Posterior cingulate gyrus (tissue), 11 donors: ENCODE measurements at regions of chr19 and their contacts with region 1.

Region 1: DNA sequence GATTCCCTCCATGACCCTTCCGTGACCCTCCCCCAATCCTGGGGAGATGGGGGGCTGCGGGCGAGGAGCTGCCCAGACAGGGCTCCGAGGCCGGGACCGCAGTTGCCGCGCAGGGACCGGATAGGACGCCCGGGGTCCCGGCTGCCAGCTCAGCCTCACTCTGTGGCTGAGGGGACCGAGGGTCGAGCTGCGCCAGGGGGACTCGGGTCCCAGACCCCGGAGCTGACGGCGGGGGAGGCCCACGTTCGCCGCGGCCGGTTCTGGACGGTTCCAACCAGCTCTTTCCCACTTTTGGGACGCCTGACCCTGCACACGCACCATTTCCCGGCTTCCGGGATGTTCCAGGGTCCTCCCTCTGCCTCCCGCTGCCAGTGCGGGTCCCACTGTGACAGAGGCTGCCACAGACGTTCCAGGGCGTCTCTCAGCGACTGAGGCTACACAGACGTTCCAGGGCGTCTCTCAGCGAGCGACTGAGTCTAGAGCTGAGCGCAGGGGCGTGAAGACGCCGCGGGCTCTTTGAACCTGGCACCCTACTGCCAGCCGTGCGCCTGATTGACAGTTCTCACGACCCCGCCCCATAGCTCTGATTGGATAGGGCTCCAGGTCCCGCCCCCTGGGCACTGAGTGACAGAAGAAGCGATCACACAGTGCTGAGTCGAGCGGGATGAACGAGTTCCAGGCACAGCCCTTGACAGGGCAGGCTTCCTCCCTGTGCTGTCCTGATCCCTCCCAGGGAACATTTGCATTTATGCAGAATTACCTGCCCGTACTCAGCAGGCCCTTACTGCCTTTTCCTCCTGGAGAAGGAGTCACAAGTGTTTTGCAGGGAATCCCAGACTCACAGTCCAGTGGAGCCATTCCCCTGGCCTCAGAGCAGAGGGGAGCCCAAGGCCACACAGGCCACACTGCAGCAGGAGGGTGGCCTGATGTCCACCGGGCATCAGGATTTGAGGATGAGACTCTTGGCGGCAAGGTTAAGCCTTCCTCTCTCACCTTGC is at the start of gene ZNF563:
- DNase-seq: peak; percentile 95 to 100 (median 99)

Region 2: GRCh38 chr19:12217332-12217731 is 116.1 kb before region 1 on chr19:
- intact Hi-C with region 1: no loop called
- DNase-seq: no peak

Region 3: DNA sequence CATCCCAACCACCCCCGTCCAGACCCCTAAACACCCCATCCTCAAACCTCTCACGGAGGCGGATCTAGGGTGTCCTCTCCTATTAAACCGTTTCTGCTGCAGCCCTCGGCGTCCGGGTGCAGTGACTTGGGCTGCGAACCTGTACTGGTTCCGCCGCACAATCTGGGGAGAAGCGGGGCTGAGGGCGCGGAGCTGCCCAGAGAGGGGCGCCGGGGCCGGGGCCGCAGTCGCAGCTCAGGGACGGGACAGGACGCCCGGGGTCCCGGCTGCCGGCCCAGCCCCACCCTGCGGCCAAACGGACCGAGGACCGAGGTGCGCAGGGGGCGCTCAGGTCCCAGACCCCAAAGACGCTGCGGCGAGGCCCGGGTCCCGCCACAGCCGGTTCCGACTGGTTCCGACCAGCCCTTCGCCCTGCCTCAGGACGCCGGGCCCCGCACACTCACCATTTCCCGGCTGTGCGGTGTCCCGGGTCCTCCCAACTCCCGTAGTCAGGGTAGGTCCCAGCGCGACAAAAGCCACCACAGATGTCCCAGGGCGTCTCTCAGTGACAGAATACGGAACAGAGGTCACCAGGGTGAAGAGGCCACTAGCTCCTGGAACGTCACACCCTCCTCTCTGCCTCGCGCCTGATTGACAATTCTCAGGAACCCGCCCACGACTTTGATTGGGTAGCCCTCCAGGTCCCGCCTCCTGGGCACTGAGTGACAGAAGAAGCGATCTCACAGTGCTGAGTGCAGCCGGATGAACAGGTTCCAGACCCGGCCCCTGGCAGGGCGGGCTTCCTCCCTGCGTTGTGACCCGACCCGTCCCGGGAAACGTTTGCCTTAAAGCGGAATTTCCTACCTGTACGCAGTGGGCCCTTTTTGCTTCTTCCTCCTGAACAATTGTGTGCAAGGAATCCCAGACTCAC is 39.0 kb before region 1 on chr19 and contains the start of gene ZNF44:
- intact Hi-C with region 1: loop called (anchors 2 kb)
- DNase-seq: peak; percentile 96 to 100 (median 98)

Region 4: GRCh38 chr19:12365236-12366162 is 32.0 kb after region 1 on chr19 and contains the start of gene ZNF442:
- intact Hi-C with region 1: loop called (anchors 2 kb)
- DNase-seq: peak; percentile 90 to 99 (median 94)

Region 5: DNA sequence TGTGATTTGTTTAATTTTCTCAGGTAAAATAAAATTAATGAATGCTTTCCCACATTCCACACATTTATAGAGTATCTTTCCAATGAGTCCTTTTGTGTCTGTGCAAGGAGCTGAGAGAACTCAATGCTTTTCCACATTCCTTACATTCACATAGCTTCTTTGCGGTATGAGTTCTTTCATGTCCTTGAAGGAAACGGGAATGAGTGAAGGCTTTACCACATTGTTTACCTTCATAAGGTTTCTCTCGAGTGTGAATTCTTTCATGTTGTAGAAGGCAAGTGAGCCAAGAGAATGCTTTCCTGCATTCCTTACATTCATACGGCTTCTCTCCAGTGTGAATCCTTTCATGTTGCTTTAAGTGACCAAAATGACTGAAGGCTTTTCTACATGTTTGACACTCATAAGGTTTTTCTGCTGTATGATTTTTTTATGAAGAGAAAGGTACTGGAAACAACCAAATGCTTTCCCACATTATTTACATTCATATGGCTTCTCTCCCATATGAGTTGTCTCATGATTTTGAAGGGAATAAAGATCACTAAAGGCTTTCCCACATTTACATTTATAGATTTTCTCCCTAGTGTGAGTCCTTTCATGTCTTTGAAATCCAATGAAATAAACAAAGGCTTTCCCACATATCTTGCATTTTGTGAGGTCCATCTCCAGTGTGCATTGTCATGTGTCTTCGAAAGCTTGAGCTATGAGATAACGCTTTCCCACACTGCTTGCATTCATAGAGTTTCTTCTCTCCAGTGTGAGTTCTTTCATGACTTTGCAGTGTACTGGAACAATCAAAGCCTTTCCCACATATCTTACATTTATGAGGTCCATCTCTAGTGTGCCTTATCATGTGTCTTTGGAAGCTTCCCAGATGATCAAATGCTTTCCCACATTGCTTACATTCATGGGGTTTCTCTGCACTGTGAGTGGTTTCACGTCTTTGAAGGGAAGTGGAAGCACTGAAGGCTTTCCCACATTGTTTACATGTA is 46.6 kb after region 1 on chr19:
- intact Hi-C with region 1: no loop called
- DNase-seq: no peak

Region 6: DNA sequence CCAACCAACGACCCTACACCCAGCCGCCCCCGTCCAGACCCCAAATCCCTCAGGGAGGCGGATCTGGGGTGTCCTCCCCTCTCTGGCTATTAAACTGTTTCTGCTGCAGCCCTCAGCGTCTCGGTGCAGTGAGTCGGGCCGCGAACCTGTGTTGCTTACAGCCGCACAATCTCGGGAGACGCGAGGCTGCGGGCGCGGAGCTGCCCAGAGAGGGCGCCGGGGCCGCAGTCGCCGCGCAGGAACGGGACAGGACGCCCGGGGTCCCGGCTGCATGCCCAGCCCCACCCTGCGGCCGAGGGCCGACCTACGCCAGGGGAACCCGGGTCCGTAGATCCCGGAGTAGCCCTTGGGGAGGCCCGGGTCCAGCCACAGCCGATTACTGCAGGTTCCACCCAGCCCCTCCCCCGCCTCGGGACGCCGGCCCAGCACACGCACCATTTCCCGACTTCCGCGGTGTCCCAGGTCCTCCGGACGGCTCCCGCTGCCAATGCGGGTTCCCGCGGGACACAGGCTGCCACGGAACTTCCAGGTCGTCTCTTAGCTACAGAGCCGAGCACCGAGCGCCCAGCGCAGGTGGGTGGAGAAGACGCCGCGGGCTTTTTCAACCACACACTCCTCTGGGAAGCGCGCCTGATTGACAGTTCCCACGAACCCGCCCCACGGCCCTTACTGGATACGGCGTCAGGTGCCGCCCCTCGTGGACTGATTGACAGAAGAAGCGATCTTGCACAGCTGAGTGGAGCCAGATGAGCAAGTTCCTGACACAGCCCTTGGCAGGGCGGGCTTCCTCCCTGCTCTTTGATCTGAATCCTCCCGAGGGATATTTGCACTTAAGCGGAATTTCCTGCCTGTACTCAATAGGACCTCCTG is 67.4 kb after region 1 on chr19 and contains the start of gene ZNF799:
- intact Hi-C with region 1: loop called (anchors 2 kb)
- DNase-seq: peak; percentile 93 to 100 (median 98)